ENCODE measurements at regions of chr2 and their contacts with region 1.

Region 1: GRCh38 chr2:143177096-143177786 is 48.0 kb downstream of the ARHGAP15 start:
- DNase-seq: no peak
- H3K4me3 Mint-ChIP-seq: no peak overlapping the region
- H3K27ac Mint-ChIP-seq: no peak overlapping the region
- H3K4me1 Mint-ChIP-seq: no peaks in the 10 kb centered on the region
- H3K27me3 Mint-ChIP-seq: no peaks in the 10 kb centered on the region
- CTCF ChIP-seq: no peak

Region 2: DNA sequence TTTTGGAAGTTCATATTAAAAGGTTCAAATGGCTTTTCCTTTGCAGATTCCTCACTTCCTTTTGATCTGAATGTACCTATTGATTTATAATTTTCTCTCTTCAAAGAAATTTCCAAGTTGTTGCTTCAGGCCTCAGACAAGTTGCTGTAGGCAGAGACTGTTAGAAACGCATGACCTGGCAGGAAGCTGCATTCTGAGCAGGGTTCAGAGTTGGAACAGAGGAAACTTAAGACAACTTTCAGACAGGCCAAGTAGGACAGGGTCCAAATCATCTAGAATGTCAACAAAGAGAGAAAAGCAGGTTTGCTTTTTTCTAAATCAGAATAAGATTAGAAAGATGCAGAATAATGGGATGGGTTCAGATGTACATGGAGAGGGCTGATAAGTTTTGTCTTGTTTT is 1462.7 kb before region 1 on chr2:
- CTCF ChIA-PET with region 1: interaction called, 12 read pairs
- intact Hi-C with region 1: no loop called
- DNase-seq: no peak
- H3K4me3 Mint-ChIP-seq: no peak overlapping the region
- H3K27ac Mint-ChIP-seq: no peak overlapping the region
- H3K4me1 Mint-ChIP-seq: no peaks in the 10 kb centered on the region
- H3K27me3 Mint-ChIP-seq: no peaks in the 10 kb centered on the region
- CTCF ChIP-seq: no peak

Region 3: DNA sequence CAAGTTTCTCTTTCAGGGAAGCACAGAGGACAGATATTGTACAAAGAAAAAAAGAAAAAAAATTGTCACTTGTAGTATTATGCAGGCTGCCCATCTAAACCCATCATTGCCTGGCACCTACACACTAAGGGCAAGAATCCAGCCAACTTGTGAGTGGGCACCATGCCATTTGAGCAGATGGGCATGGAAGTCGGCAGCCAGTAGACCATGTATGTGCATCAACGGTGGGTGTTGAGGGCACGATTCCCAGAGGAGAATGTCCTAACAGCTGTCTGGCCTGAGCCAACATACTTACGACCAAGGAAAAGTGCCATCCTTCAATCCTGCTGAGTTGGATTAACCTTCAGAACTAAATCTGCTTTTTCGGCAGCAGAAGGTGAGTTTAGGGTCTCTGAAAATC is 15.9 kb after region 1 on chr2:
- CTCF ChIA-PET with region 1: no interaction called
- intact Hi-C with region 1: no loop called
- DNase-seq: no peak
- H3K4me3 Mint-ChIP-seq: no peak overlapping the region
- H3K27ac Mint-ChIP-seq: no peak overlapping the region
- H3K4me1 Mint-ChIP-seq: no peaks in the 10 kb centered on the region
- H3K27me3 Mint-ChIP-seq: no peaks in the 10 kb centered on the region
- CTCF ChIP-seq: no peak

Region 4: GRCh38 chr2:143204062-143204461 is 26.8 kb after region 1 on chr2:
- CTCF ChIA-PET with region 1: no interaction called
- intact Hi-C with region 1: no loop called
- DNase-seq: no peak
- H3K4me3 Mint-ChIP-seq: no peak overlapping the region
- H3K27ac Mint-ChIP-seq: no peak overlapping the region
- H3K4me1 Mint-ChIP-seq: no peaks in the 10 kb centered on the region
- H3K27me3 Mint-ChIP-seq: no peaks in the 10 kb centered on the region
- CTCF ChIP-seq: no peak

Measured in Calu3 (cell line).